H1 (cell line): ENCODE measurements at regions of chr21 and their contacts with region 1.

Region 1: GRCh38 chr21:30355906-30356305 is 7.5 kb upstream of the KRTAP23-1 start:
- DNase-seq: no peak
- H3K4me3 ChIP-seq: no peak overlapping the region
- H3K27ac ChIP-seq: no peak overlapping the region
- H3K4me1 ChIP-seq: peaks cover 0 to 2% (median 0%) of the 10 kb centered on the region in 4 experiments; a peak in 1 of 7 replicates
- H3K27me3 ChIP-seq: no peaks in the 10 kb centered on the region
- CTCF ChIP-seq: no peak
- EP300 ChIP-seq: no peak
- POLR2A ChIP-seq: no peak
- RAD21 ChIP-seq: no peak

Region 2: DNA sequence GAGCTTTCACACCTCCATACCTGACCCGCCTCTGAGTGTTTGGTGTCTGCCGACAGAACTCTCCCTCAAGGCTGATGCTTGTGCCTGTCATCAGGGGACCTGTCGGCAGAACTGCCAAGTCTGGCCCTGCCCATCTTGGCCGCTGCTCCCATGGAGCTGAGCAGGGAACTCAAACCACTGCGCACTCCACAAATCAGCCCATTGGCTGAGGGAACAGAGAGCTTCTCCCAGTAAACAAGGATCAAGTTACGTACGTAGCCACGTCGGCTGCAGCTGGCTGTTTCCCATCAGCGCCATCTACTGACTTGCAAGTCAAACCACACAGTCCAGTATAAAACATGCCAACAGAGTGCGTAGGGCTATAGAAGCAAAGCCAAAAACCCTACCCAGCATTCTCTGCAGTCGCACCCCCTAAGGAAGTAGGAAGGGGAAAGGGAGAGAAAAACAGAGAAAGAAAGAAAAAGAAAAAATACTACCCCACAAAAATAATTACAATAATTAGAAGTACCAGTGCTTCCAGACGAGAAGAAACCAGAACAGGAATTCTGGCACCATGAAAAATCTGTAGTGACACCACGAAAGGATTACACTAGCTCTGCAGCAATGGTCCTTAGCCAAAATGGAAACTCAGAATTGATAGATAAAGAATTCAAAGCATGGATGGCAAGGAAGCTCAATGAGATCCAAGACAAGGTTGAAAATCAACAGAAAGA is 53.0 kb after region 1 on chr21:
- CTCF ChIA-PET with region 1: interaction called, 14 read pairs
- POLR2A ChIA-PET with region 1: no interaction called
- DNase-seq: peak; percentile 74 to 95
- H3K4me3 ChIP-seq: peak overlapping the region in 1 of 4 experiments; percentile 28; a peak in 1 of 8 replicates
- H3K27ac ChIP-seq: no peak overlapping the region
- H3K4me1 ChIP-seq: peaks cover 0 to 3% (median 1%) of the 10 kb centered on the region in 4 experiments; a peak in 1 of 7 replicates
- H3K27me3 ChIP-seq: no peaks in the 10 kb centered on the region
- CTCF ChIP-seq: peak; percentile 76 to 91 (median 79)
- EP300 ChIP-seq: peak in 1 of 2 experiments; percentile 72; a peak in 1 of 3 replicates
- POLR2A ChIP-seq: 0 out of 3 replicates have a peak, but pooled peaks of 1 of the 2 experiments have one; percentile 45
- RAD21 ChIP-seq: peak; percentile 69 to 75

Region 3: DNA sequence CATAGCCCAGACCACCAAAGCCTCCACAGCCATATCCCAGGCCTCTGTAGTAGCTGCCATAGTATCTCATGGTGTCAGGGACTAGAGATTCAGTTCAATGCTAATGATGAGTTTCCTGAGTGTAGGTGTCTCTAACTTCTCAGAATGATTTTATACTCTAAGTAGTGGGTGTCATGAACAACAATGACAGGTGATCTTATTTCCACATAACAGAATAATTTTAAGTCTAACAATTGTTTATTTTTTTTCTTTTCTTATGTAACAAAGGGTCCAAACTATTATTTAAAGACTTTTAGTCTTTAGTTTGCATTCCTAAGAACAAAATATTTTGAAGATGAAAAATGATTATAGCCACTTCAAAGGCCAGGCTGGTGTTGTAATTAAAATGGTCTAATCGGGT is 185.9 kb after region 1 on chr21 and contains the start of gene KRTAP19-6:
- CTCF ChIA-PET with region 1: no interaction called
- POLR2A ChIA-PET with region 1: no interaction called
- DNase-seq: no peak
- H3K4me3 ChIP-seq: no peak within 1 kb of the TSS
- H3K27ac ChIP-seq: no peak within 1 kb of the TSS
- H3K4me1 ChIP-seq: no peaks in the 10 kb centered on the region
- H3K27me3 ChIP-seq: no peaks in the 10 kb centered on the region
- CTCF ChIP-seq: no peak
- EP300 ChIP-seq: no peak
- POLR2A ChIP-seq: no peak
- RAD21 ChIP-seq: no peak
- total RNA-seq, gene KRTAP19-6: not detected in 2 replicates